ENCODE measurements at regions of chr1 and their contacts with region 1.

Region 1: GRCh38 chr1:92623187-92623778 is 136.6 kb upstream of the GFI1 start:
- DNase-seq: no peak

Region 2: DNA sequence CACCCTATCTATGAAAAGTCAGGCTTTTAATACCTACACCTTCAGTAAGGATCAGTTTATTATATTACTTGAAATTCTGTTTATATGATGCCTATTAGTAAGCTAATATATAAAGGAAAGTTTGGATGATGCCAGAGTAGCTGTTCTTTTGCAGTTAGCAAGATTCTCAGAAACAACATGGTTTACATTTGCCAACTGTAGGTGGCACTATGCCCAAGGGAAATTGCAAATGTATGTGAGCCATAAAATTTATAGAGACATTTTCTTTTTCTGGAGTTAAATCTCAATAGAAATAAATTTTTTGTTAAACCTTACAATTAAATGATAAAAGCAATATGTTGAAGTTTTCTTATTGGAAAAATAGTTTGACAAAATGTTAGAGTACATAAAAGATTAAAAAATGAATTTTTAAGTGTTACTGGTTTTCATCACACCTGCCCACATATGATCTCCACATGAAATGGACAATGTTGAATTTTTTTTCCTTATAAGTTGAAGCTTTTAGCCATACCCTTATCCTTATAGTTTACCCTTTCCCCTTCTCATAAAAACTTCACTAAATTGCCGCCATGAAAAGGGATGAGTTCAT is 625.6 kb before region 1 on chr1:
- intact Hi-C with region 1: loop called (anchors 10 kb)
- DNase-seq: peak in 2 of 10 donors; percentile 30 to 42

Region 3: DNA sequence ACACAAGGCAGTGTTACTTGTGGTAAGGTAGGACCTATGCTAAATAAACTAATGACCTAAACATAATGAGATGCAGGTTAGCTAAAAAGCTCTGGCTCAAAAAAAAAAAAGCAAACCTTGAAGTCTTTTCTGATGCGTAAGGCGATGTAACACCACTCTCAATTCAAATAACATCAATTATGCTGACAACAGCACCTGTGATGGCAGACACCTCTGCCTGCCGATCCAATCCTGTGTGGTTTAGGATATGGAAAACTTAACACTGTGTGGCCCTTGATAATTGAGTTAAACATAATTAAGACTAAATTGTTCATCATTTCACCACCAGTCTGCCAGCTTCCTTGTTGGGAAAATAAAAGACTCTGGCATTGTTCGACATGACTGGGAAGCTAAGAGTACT is 315.3 kb before region 1 on chr1:
- intact Hi-C with region 1: loop called (anchors 1 kb)
- DNase-seq: no peak

Measured in posterior cingulate gyrus (tissue), 11 donors.